ENCODE measurements at regions of chr15 and their contacts with region 1.

Region 1: GRCh38 chr15:34209421-34210282 is at the start of gene KATNBL1:
- DNase-seq: peak; percentile 99
- total RNA-seq, gene KATNBL1: 40.1 to 54.8 TPM

Region 2: DNA sequence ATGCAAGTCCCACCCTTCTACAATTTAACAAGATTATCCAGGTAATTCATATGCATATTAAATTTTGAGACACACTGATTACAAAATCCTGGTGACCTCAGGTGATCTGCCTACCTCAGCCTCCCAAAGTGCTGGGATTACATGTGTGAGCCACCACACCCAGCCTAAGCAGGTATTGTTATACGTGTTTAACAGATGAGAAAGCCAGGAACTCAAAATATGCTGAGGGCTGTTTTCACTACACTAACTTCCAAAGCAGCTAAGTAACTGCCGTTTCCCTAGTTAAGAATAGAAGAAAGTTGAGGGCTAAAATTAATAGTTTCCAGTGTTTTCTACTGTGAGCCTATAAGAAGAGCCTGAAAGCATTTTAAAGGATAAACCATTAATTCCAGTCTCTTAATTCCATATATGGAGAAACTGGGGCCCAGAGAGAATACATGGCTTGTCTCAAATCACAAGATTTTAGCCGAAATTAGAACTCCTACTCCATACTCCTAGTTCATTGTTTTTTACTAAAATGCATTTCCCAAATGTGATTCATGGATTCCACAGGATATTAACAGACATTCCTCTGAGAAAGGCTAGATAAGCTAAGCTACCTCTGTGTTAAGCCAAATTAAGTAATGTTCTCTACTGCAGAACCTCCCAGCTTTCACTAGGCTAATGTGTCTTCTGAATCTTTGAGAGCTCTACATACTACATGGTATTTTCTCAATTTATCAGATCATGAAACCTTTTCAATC is 153.6 kb before region 1 on chr15:
- intact Hi-C with region 1: loop called (anchors 5 kb)
- DNase-seq: no peak

Region 3: GRCh38 chr15:34064438-34064837 is 145.2 kb before region 1 on chr15:
- intact Hi-C with region 1: loop called (anchors 5 kb)
- DNase-seq: no peak

Measured in posterior vena cava (tissue), 2 donors.